ENCODE measurements at regions of chr10 and their contacts with region 1.

Region 1: DNA sequence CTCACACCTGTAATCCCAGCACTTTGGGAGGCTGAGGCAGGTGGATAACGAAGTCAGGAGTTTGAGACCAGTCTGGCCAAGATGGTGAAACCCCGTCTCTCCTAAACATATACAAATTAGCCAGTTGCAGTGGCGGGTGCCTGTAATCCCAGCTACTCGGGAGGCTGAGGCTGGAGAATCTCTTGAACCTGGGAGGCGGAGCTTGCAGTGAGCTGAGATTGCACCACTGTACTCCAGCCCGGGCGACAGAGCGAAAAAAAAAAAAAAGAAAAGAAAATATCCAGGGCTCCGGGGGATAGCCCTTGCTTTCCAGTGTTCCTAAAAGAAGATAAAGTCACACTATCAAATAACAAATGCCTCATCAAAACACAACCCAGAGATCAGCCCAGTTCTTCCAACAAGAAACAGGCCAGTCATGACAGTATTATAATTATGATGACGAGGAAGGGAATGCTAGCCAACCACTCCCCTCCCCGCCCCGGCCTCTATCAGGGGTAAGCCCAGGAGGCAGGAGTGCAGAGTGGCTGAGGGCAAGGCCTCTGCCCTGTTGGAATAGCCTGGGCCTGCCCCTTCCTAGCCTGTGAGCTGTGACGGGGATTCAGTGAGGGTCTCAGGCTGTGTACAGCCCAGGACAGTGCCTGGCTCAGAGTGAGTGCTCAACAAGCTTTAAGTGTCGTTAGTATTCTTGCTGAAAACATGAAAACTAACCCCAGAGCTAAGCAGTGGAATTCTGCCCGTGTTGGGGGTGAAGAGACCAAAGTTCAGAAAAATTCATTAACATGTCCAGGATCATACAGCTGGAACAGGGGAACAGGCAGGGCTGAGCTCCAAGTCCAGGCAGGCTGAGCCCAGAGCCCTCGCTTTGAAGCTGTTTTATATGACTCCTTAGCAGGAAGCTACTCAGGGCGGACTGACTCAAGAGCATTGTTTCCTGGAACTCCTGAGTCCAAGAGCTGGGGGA is 54.3 kb downstream of the FAM241B start:
- DNase-seq: no peak
- H3K4me3 ChIP-seq: no peak overlapping the region
- H3K27ac ChIP-seq: no peak overlapping the region
- H3K27me3 ChIP-seq: peaks cover 52% of the 10 kb centered on the region
- CTCF ChIP-seq: no peak

Region 2: GRCh38 chr10:69696073-69696731 is 11.9 kb after region 1 on chr10:
- CTCF ChIA-PET with region 1: interaction called, 21 read pairs
- POLR2A ChIA-PET with region 1: no interaction called
- DNase-seq: peak; percentile 69
- H3K4me3 ChIP-seq: no peak overlapping the region
- H3K27ac ChIP-seq: no peak overlapping the region
- H3K27me3 ChIP-seq: peaks cover 19% of the 10 kb centered on the region
- CTCF ChIP-seq: peak; percentile 73

Measured in AG04450 (cell line).